Sciatic nerve (tissue), 2 donors: ENCODE measurements at regions of chr10 and their contacts with region 1.

Region 1: GRCh38 chr10:132023092-132023811 is 41.5 kb upstream of the BNIP3 start:
- DNase-seq: peak; percentile 91
- ATAC-seq: peak; percentile 92

Region 2: DNA sequence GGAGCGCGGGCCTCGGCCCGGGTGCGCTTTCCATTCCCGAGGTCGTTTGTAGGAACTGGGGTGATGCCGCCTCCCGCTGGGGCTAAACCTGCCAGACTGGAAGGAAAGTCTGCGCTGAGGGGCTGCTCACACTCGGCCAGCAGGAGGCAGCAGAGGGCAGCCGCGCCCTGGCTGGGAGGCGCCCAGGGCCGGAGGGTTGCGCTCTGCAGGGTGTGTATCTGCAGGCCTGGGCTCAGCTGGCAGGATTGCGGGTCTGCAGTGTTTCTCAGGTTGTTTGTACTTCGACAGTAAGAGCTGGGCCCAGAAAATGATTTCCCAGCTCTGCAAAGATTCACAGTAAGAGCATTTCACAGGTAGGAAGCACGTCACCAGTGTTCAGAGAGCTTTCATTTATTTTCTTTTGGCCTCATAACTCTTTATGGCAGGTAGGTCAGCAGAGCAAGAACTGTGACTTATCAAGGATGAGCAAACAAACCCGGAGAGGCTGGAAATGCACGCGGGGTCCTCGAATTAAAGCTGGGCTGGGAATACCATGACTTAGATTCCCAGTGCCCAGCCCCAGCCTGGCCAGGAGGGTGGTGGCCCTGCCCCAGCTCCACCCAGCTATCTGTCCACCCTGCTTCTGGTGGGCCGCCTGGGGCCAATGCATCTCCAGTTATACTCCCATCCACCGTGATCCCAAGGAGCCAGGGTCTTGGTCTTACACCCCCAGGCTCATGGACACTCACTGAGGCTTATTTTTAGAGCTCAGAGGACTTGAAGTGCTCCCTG is 137.7 kb before region 1 on chr10:
- intact Hi-C with region 1: loop called (anchors 2 kb)
- DNase-seq: peak; percentile 82
- ATAC-seq: peak; percentile 96